ENCODE measurements at regions of chr14 and their contacts with region 1.

Region 1: DNA sequence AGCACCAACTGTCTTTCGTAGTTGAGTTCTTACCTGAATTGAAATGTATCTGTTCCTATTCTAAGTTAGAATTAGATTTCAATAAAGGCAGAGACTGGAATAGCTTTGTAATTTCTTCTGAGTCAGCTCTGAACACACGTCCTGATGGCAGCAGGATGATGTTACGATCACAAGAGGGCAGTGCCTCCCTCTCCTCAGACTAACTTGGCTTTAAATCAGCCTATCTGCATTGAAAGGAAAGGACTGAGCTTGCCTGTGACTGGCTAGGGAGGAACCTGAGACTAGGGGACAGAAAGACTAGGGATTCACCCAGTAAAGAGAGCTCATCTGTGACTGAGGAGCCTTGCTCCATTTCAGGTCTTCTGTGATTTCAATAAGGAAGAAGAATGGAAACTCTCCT is 323.7 kb upstream of the OR4E1 start:
- DNase-seq: peak; percentile 39
- ATAC-seq: peak; percentile 100
- H3K4me3 Mint-ChIP-seq: no peak overlapping the region
- H3K27ac Mint-ChIP-seq: peak overlapping the region; percentile 63; the same call in 1 of the 2 replicates
- H3K4me1 Mint-ChIP-seq: peaks cover 3% of the 10 kb centered on the region
- H3K27me3 Mint-ChIP-seq: no peaks in the 10 kb centered on the region
- CTCF ChIP-seq: no peak

Region 2: GRCh38 chr14:21917699-21918436 is 79.4 kb before region 1 on chr14:
- CTCF ChIA-PET with region 1: interaction called, 84 read pairs
- POLR2A ChIA-PET with region 1: no interaction called
- DNase-seq: peak; percentile 31
- ATAC-seq: peak; percentile 66
- H3K4me3 Mint-ChIP-seq: no peak overlapping the region
- H3K27ac Mint-ChIP-seq: no peak overlapping the region
- H3K4me1 Mint-ChIP-seq: no peaks in the 10 kb centered on the region
- H3K27me3 Mint-ChIP-seq: peaks cover 10% of the 10 kb centered on the region
- CTCF ChIP-seq: peak; percentile 37; the same call in 1 of the 2 replicates

Region 3: DNA sequence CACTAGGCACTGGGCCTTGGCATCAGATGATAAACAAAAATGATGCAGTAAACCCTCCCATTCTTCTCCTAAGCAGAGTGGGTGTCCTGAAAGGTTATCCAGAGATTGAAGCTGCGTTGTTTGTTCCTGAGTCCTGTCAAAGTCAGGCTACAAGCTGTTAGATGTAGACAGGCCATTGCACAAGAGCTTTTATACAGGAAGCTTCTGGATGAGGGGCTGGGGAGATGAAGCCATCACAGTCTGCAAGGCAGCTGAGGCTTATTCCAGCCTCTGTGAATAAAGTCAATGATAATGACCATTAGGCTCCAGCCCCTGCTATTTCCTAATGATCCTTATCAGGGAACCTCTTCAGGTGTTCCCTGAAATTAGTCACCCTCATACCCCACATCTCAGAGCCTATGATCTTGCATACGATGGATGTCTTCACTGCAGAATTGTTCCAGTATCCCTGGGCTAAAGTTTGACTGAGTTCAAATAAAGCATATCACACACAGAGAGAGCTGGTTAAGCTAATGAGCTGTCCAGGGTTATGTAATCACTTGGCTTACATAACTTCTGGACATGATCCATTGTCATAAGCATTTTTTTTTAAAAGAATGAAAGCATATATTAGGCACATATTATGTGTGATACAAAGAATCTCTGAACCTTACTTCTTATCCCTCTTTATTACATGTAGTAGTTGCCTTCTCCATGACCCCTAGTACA is 13.4 kb after region 1 on chr14:
- CTCF ChIA-PET with region 1: interaction called, 18 read pairs
- POLR2A ChIA-PET with region 1: no interaction called
- DNase-seq: no peak
- ATAC-seq: no peak
- H3K4me3 Mint-ChIP-seq: no peak overlapping the region
- H3K27ac Mint-ChIP-seq: no peak overlapping the region
- H3K4me1 Mint-ChIP-seq: no peaks in the 10 kb centered on the region
- H3K27me3 Mint-ChIP-seq: peaks cover 16% of the 10 kb centered on the region
- CTCF ChIP-seq: no peak

Region 4: DNA sequence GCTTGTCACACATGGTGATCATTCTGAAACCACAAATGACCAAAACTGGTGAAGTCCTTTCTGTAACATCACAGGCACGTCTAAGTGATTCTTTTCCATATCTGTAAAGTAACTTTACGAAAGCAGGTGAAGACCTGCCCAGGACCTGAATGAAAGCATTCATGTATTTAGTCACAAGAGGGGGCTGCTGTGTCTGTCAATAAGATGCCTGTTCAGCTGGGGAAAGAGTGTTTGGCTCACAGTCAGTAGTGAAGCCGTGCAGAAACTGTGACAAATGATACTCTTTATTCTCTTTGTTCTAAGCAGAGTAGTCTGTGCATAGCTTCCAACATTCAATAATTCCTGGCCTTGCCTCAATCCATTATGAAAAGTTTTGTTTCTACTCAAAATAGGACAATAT is 49.8 kb after region 1 on chr14:
- CTCF ChIA-PET with region 1: interaction called, 15 read pairs
- POLR2A ChIA-PET with region 1: no interaction called
- DNase-seq: no peak
- ATAC-seq: peak; percentile 86
- H3K4me3 Mint-ChIP-seq: no peak overlapping the region
- H3K27ac Mint-ChIP-seq: no peak overlapping the region
- H3K4me1 Mint-ChIP-seq: peaks cover 6% of the 10 kb centered on the region
- H3K27me3 Mint-ChIP-seq: no peaks in the 10 kb centered on the region
- CTCF ChIP-seq: no peak

Region 5: GRCh38 chr14:22084393-22085281 is 87.3 kb after region 1 on chr14:
- CTCF ChIA-PET with region 1: interaction called, 10 read pairs
- POLR2A ChIA-PET with region 1: no interaction called
- DNase-seq: no peak
- ATAC-seq: peak; percentile 57
- H3K4me3 Mint-ChIP-seq: no peak overlapping the region
- H3K27ac Mint-ChIP-seq: no peak overlapping the region
- H3K4me1 Mint-ChIP-seq: peaks cover 4% of the 10 kb centered on the region
- H3K27me3 Mint-ChIP-seq: 0 out of 2 replicates have a peak, but pooled peaks cover 2% of the 10 kb centered on the region
- CTCF ChIP-seq: peak; percentile 70

Region 6: DNA sequence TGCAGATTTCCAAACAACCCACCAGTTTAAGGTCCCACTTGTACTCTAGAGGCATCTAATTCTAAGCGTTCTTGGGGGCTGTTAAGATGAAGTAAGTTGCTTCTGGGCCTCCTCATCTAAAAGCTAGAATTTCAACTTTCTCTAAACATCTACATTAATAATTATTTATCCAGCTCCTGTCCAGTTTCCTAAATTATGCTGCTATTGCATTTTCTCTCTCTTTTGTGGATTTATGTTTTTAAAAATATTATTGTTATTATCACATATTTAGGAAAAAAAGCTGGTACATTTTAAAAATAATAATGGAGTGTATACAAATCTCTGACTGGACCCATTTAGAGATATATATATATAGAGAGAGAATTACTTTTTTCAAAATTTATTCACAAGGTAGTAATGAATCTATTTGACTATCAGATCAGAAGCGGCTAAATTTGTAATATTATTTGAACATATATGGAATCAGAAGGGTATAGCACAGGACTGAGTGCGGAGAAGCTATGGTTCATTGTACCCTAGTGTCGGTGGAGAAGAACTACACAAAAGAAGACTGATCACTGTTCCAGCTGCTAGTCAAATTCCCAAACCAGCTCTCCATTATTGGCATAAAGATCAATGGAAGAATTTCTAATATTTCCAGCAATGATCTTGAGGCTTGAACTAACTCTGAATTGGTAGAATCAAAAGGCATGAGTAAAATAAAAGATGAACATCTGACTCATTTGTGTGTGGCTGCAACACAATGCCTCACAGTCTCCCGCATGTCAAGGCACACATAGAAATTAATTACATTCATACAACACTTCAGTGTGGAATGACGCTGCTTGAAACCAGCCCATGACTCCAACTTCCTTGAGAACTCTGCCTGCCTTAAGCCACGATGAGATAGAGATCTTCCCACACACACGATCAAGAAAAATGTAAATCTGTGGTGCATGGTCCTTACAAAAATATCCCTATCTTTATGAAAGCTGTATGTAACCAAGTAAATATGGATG is 109.7 kb after region 1 on chr14:
- CTCF ChIA-PET with region 1: interaction called, 14 read pairs
- POLR2A ChIA-PET with region 1: no interaction called
- DNase-seq: no peak
- ATAC-seq: peak; percentile 28; the same call in 1 of the 2 replicates
- H3K4me3 Mint-ChIP-seq: no peak overlapping the region
- H3K27ac Mint-ChIP-seq: no peak overlapping the region
- H3K4me1 Mint-ChIP-seq: no peaks in the 10 kb centered on the region
- H3K27me3 Mint-ChIP-seq: no peaks in the 10 kb centered on the region; the same call in 1 of the 2 replicates
- CTCF ChIP-seq: no peak